ENCODE measurements at regions of chr2 and their contacts with region 1.

Region 1: DNA sequence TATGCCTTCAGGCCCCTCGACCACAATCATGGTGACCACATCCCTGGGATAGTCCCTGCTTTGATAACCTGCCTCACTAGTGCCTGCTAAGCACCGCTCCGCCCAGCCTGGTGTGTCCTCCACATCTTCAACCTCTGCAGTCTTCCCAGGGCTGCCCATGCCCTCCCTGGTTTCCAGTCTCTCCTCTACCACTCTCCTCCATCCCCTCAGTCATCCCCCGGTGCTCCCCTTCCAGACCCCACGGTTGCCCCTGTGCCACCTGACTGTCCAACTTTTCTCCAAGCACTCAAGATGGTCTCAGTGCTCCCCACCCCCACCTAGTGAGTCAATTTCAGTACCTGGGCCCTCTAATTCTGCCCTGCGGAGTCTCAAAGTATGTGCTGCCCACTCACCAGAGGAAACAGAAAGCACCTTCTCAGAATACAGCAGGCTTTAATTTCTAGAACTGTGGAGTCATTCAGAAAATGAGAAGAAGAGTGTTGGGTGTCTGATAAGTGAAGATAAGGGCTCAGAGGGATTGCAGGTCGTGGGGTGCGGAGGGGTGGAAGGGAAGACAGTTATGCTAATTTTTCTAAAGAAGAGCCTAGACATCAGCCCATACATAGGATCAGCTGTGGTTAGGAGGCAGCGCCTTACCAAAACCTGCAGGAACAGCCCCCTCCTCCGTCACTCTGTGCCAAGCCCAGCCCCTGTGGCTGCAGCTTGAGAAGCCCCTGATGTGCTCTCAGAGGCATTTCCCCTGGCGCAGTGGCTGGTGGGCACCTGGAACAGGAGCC is 53.6 kb upstream of the CAB39 start:
- DNase-seq: peak in 5 of 10 donors; percentile 15 to 38 (median 30)
- ATAC-seq: peak; percentile 23 to 58
- H3K4me3 Mint-ChIP-seq: peak overlapping the region; percentile 30 to 80 (median 62)
- H3K27ac Mint-ChIP-seq: peak overlapping the region; percentile 53 to 88 (median 82)
- H3K4me1 Mint-ChIP-seq: peaks cover 47 to 91% (median 88%) of the 10 kb centered on the region in 4 donors
- H3K27me3 Mint-ChIP-seq: no peaks in the 10 kb centered on the region

Region 2: GRCh38 chr2:230594286-230594840 is 64.7 kb before region 1 on chr2:
- POLR2A ChIA-PET with region 1: no interaction called
- DNase-seq: no peak
- ATAC-seq: no peak
- H3K4me3 Mint-ChIP-seq: no peak overlapping the region
- H3K27ac Mint-ChIP-seq: peak overlapping the region in 4 of 10 donors; percentile 2 to 79 (median 33)
- H3K4me1 Mint-ChIP-seq: peaks cover 20 to 76% (median 69%) of the 10 kb centered on the region in 4 donors
- H3K27me3 Mint-ChIP-seq: no peaks in the 10 kb centered on the region

Region 3: DNA sequence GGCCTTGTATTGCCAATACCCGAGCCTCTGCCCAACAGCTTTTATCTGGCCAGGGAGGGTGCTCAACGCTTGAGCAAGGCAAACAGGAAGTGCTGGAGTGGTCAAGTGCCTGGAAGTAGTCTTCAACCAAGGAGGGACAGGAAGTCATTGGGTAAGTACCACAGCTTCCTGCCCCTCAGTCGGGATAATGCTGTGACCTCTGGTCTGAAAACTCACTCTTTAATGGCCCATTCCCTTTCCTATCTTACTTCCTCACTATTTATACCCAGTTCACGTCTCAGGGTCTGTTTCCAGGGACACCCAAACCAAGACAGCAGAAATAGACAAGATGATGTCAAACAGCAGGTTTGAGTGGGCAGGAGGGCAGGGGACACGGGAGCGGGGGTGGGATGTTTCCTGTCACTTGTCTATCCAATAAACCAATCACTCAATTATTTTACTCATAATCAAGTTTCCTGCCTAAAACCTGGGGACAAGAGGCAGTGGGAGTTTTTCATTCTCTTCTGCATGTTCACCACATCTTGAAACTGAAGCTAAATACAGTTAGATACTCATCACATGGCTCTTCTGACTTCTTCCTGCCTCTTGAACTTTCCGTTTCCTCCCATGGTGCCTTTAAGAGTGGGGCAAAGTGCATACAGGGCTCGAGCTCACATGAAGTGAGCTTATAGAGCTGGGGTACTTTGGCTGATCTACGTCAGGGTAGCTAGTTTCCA is 15.3 kb before region 1 on chr2:
- POLR2A ChIA-PET with region 1: interaction called, 51 read pairs
- DNase-seq: peak in 7 of 10 donors; percentile 19 to 69 (median 35)
- ATAC-seq: peak; percentile 96 to 99
- H3K4me3 Mint-ChIP-seq: peak overlapping the region; percentile 41 to 79 (median 72)
- H3K27ac Mint-ChIP-seq: peak overlapping the region; percentile 82 to 98 (median 95)
- H3K4me1 Mint-ChIP-seq: peaks cover 8 to 31% (median 24%) of the 10 kb centered on the region in 4 donors
- H3K27me3 Mint-ChIP-seq: no peaks in the 10 kb centered on the region

Region 4: GRCh38 chr2:230712443-230713330 is 53.6 kb after region 1 on chr2 and contains the start of gene CAB39:
- POLR2A ChIA-PET with region 1: interaction called, 11 read pairs
- DNase-seq: peak; percentile 82 to 94 (median 89)
- ATAC-seq: peak; percentile 83 to 84
- H3K4me3 Mint-ChIP-seq: peak within 1 kb of the TSS; percentile 97 to 99 (median 98)
- H3K27ac Mint-ChIP-seq: peak within 1 kb of the TSS; percentile 94 to 98 (median 97)
- H3K4me1 Mint-ChIP-seq: peaks cover 26 to 52% (median 47%) of the 10 kb centered on the region in 4 donors
- H3K27me3 Mint-ChIP-seq: no peaks in the 10 kb centered on the region
- polyA plus RNA-seq, gene CAB39: 62.5 to 81.5 (median 67.1) TPM

Measured in naive thymus-derived CD8-positive, alpha-beta T cell (primary cell).